HepG2 (cell line): ENCODE measurements at regions of chr7 and their contacts with region 1.

Region 1: DNA sequence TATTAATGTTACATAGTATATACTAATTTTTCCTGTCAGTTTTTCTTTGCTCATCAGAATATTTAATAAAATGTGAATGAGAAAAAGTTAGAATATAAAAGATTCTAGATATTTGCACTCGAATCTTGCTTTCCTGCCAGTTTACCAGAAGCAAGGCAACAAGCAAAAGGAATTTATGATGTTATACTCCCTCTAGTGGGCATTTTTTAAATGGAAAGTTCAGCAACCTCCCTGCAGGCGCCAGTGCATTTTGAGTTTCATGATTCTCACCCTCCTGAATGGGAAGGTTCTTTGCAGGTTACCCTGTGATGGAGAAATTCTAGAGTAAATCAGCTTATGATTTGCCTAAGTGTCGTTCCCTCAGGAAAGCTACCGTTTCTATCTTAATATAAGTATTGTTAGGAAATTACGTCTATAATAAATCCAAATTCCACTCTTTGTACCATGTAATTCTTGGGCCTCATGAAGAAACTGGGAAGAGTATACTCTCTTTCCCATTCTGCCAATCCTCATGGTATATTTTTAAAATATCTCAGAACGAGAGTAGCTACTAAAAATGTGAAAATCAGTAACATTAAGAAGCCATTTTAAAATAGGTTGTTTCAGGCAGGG is 350.0 kb downstream of the CRPPA start:
- DNase-seq: peak; percentile 50
- ATAC-seq: peak; percentile 72
- H3K4me3 ChIP-seq: no peak overlapping the region
- H3K27ac ChIP-seq: no peak overlapping the region
- H3K4me1 ChIP-seq: no peaks in the 10 kb centered on the region
- H3K27me3 ChIP-seq: no peaks in the 10 kb centered on the region
- CTCF ChIP-seq: peak; percentile 70
- EP300 ChIP-seq: no peak
- POLR2A ChIP-seq: no peak
- RAD21 ChIP-seq: no peak

Region 2: DNA sequence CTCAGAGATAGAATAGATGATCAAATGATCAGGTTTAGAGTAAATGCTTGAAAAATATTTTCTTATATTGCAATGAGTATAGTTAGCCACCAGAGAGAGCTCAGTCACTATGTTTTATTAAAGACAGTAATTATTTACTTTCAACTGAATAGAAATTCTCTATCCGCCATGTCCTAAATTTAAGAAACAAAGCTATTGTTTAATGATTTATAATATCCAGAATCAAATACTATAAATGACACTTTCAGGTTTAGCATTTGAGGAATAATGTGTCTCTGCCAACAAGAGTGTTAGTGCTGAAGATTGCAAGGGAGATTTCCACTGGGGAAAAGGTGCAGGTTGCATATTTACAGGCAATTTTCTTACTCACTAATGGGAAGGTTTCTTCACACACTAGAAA is 1353.5 kb before region 1 on chr7:
- CTCF ChIA-PET with region 1: no interaction called
- POLR2A ChIA-PET with region 1: no interaction called
- in situ Hi-C with region 1: loop called (anchors 25 kb)
- intact Hi-C with region 1: loop called (anchors 10 kb)
- DNase-seq: no peak
- ATAC-seq: no peak
- H3K4me3 ChIP-seq: no peak overlapping the region
- H3K27ac ChIP-seq: no peak overlapping the region
- H3K4me1 ChIP-seq: no peaks in the 10 kb centered on the region
- H3K27me3 ChIP-seq: no peaks in the 10 kb centered on the region
- CTCF ChIP-seq: 0 out of 2 replicates have a peak, but pooled peaks have one; percentile 8
- EP300 ChIP-seq: no peak
- POLR2A ChIP-seq: no peak
- RAD21 ChIP-seq: no peak

Region 3: DNA sequence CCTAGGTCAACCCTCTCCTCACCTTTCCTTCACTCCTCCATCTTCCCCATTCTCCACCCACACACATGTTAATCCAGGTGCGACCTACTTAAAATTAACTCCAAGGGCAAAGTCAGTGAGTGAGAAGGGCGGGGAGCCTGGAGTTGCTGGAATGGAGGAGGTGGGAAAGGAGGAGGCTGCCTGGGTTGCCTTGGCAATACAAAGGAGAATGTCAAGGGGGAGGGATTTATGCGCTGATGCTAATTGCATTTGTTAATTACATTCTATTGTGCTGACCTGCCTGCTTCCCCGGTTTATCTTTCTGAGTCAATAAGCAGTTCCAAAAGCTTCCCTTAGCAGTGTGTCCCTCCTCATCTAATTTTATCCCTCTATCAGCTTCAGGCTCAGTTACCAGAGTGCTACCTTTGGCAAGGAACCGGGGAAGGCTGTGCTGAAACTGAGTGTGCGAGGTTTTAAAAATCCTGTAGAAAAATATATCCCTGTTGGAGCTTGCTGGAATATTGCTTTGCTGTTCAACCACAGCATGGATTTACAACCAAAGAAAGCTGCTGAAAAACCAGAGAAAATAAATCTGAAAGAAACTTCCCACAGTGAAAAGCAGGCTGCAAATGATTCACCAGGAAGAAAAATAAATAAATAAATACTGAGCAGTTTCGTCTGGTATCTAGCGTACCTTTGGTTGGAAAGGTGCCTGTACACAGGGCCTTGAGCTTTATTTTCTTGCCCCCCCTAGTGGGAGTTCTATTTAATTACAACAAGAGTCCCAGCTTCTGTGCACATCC is 1055.6 kb before region 1 on chr7:
- CTCF ChIA-PET with region 1: no interaction called
- POLR2A ChIA-PET with region 1: no interaction called
- in situ Hi-C with region 1: loop called (anchors 25 kb)
- intact Hi-C with region 1: no loop called
- DNase-seq: peak; percentile 75
- ATAC-seq: peak; percentile 98
- H3K4me3 ChIP-seq: no peak overlapping the region
- H3K27ac ChIP-seq: no peak overlapping the region
- H3K4me1 ChIP-seq: no peaks in the 10 kb centered on the region
- H3K27me3 ChIP-seq: no peaks in the 10 kb centered on the region
- CTCF ChIP-seq: peak; percentile 63
- EP300 ChIP-seq: no peak
- POLR2A ChIP-seq: no peak
- RAD21 ChIP-seq: no peak

Region 4: GRCh38 chr7:15326044-15326644 is 745.2 kb before region 1 on chr7:
- CTCF ChIA-PET with region 1: interaction called, 3 read pairs
- POLR2A ChIA-PET with region 1: no interaction called
- in situ Hi-C with region 1: loop called (anchors 25 kb)
- intact Hi-C with region 1: loop called (anchors 1 kb)
- DNase-seq: peak; percentile 3
- ATAC-seq: no peak
- H3K4me3 ChIP-seq: no peak overlapping the region
- H3K27ac ChIP-seq: no peak overlapping the region
- H3K4me1 ChIP-seq: no peaks in the 10 kb centered on the region
- H3K27me3 ChIP-seq: no peaks in the 10 kb centered on the region
- CTCF ChIP-seq: no peak
- EP300 ChIP-seq: no peak
- POLR2A ChIP-seq: no peak
- RAD21 ChIP-seq: no peak

Region 5: GRCh38 chr7:16431646-16432424 is 360.5 kb after region 1 on chr7:
- CTCF ChIA-PET with region 1: no interaction called
- POLR2A ChIA-PET with region 1: no interaction called
- in situ Hi-C with region 1: no loop called
- intact Hi-C with region 1: loop called (anchors 10 kb)
- DNase-seq: peak; percentile 54
- ATAC-seq: peak; percentile 97
- H3K4me3 ChIP-seq: no peak overlapping the region
- H3K27ac ChIP-seq: no peak overlapping the region
- H3K4me1 ChIP-seq: no peaks in the 10 kb centered on the region
- H3K27me3 ChIP-seq: no peaks in the 10 kb centered on the region
- CTCF ChIP-seq: peak; percentile 66
- EP300 ChIP-seq: no peak
- POLR2A ChIP-seq: no peak
- RAD21 ChIP-seq: no peak